ENCODE measurements at regions of chr7 and their contacts with region 1.

Region 1: GRCh38 chr7:92717993-92718716 is 118.2 kb downstream of the CDK6 start:
- DNase-seq: no peak

Region 2: DNA sequence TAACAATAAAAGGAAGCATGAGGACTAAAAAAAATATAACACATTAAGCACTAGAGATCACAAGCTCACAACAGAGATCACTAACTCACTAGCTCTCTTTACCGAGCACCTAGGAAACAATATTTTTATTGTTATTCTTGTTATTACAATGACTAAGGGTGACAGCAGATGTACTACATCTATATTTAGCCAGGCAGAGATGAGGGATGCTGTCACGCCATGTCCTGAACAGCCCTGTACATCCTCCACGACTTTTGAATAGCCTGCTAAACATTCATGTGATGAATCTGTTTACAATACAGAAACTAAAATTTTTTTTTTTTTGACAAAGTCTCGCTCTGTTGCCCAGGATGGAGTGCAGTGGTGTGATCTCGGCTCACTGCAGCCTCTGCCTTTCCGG is 150.7 kb before region 1 on chr7:
- intact Hi-C with region 1: no loop called
- DNase-seq: no peak

Region 3: GRCh38 chr7:92781117-92781720 is 63.1 kb after region 1 on chr7:
- intact Hi-C with region 1: loop called (anchors 5 kb)
- DNase-seq: no peak

Region 4: DNA sequence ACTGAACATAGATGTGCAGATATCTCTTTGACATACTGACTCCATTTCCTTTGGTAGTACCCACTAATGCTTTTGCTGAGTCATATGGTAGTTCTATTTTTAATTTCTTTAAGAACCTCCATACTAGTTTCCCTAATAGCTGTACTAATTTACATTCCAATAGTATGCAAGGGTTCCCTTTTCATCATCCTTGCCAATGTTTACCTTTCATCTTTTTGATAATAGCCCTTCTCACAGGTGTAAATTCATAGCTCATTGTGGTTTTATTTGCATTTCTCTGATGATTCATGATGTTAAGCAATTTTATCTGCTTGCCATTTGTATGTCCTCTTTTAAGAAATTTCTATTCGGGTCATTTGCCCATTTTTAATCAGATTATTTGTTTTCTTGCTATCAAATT is 696.5 kb after region 1 on chr7:
- intact Hi-C with region 1: no loop called
- DNase-seq: no peak